Naive thymus-derived CD4-positive, alpha-beta T cell (primary cell): ENCODE measurements at regions of chr9 and their contacts with region 1.

Region 1: GRCh38 chr9:84296146-84296843 is 44.3 kb downstream of the SLC28A3 start:
- DNase-seq: peak in 2 of 9 donors; percentile 9 to 61
- ATAC-seq: peak; percentile 79
- H3K4me3 ChIP-seq: no peak overlapping the region
- H3K4me3 Mint-ChIP-seq: peak overlapping the region in 6 of 10 donors; percentile 5 to 71 (median 44)
- H3K27ac ChIP-seq: peak overlapping the region; percentile 6
- H3K27ac Mint-ChIP-seq: peak overlapping the region; percentile 54 to 100 (median 79)
- H3K4me1 ChIP-seq: peaks cover 8 to 32% of the 10 kb centered on the region in 2 donors
- H3K4me1 Mint-ChIP-seq: peaks cover 19 to 74% (median 48%) of the 10 kb centered on the region in 7 donors
- H3K27me3 ChIP-seq: no peaks in the 10 kb centered on the region
- H3K27me3 Mint-ChIP-seq: no peaks in the 10 kb centered on the region

Region 2: GRCh38 chr9:83956434-83957247 is 339.7 kb before region 1 on chr9:
- CTCF ChIA-PET with region 1: no interaction called
- POLR2A ChIA-PET with region 1: no interaction called
- intact Hi-C with region 1: loop called in 1 of 2 experiments (anchors 5 kb)
- DNase-seq: peak; percentile 25 to 73 (median 42)
- ATAC-seq: peak; percentile 76
- H3K4me3 ChIP-seq: peak overlapping the region; percentile 88
- H3K4me3 Mint-ChIP-seq: peak overlapping the region; percentile 94 to 98 (median 95)
- H3K27ac ChIP-seq: peak overlapping the region; percentile 77
- H3K27ac Mint-ChIP-seq: peak overlapping the region; percentile 88 to 99 (median 94)
- H3K4me1 ChIP-seq: peaks cover 4 to 13% of the 10 kb centered on the region in 2 donors
- H3K4me1 Mint-ChIP-seq: peaks cover 6 to 23% (median 19%) of the 10 kb centered on the region in 7 donors
- H3K27me3 ChIP-seq: no peaks in the 10 kb centered on the region
- H3K27me3 Mint-ChIP-seq: no peaks in the 10 kb centered on the region

Region 3: GRCh38 chr9:84027201-84027600 is 269.1 kb before region 1 on chr9:
- CTCF ChIA-PET with region 1: no interaction called
- POLR2A ChIA-PET with region 1: no interaction called
- intact Hi-C with region 1: no loop called
- DNase-seq: no peak
- ATAC-seq: no peak
- H3K4me3 ChIP-seq: no peak overlapping the region
- H3K4me3 Mint-ChIP-seq: no peak overlapping the region
- H3K27ac ChIP-seq: no peak overlapping the region
- H3K27ac Mint-ChIP-seq: no peak overlapping the region
- H3K4me1 ChIP-seq: no peaks in the 10 kb centered on the region
- H3K4me1 Mint-ChIP-seq: no peaks in the 10 kb centered on the region
- H3K27me3 ChIP-seq: no peaks in the 10 kb centered on the region
- H3K27me3 Mint-ChIP-seq: peaks cover 8 to 17% (median 12%) of the 10 kb centered on the region in 5 donors

Region 4: GRCh38 chr9:84261082-84261746 is 35.1 kb before region 1 on chr9:
- CTCF ChIA-PET with region 1: interaction called, 5 read pairs
- POLR2A ChIA-PET with region 1: no interaction called
- intact Hi-C with region 1: loop called in 1 of 2 experiments (anchors 1 kb)
- DNase-seq: peak; percentile 7 to 46 (median 22)
- ATAC-seq: peak; percentile 77
- H3K4me3 ChIP-seq: no peak overlapping the region
- H3K4me3 Mint-ChIP-seq: peak overlapping the region in 5 of 10 donors; percentile 4 to 68 (median 26)
- H3K27ac ChIP-seq: no peak overlapping the region
- H3K27ac Mint-ChIP-seq: no peak overlapping the region
- H3K4me1 ChIP-seq: no peaks in the 10 kb centered on the region
- H3K4me1 Mint-ChIP-seq: peaks cover 0 to 14% (median 4%) of the 10 kb centered on the region in 7 donors
- H3K27me3 ChIP-seq: no peaks in the 10 kb centered on the region
- H3K27me3 Mint-ChIP-seq: peaks cover 0 to 17% (median 0%) of the 10 kb centered on the region in 5 donors

Region 5: DNA sequence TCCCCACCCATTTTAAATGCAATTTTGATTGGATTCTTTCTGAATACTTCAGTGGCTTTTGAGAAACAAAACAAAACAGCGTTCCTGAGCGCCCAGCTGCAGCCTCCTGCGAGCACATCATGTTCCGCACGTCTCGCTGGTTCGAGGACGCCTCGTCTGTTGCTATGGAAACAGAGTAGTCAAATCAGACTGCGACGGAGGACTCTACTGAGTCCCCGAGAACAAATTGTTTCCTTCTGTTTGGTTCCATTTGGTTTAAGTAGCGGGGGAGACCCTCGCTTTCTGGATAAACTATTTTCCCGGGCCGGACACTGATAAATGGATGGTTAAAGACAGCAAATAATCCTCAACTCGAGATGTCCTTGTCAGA is 24.8 kb before region 1 on chr9:
- CTCF ChIA-PET with region 1: no interaction called
- POLR2A ChIA-PET with region 1: no interaction called
- intact Hi-C with region 1: loop called (anchors 1 to 2 kb)
- DNase-seq: peak in 6 of 9 donors; percentile 35 to 57 (median 47)
- ATAC-seq: peak; percentile 64
- H3K4me3 ChIP-seq: no peak overlapping the region
- H3K4me3 Mint-ChIP-seq: peak overlapping the region in 9 of 10 donors; percentile 42 to 82 (median 64)
- H3K27ac ChIP-seq: no peak overlapping the region
- H3K27ac Mint-ChIP-seq: peak overlapping the region in 4 of 9 donors; percentile 4 to 79 (median 38)
- H3K4me1 ChIP-seq: peaks cover 0 to 7% of the 10 kb centered on the region in 2 donors
- H3K4me1 Mint-ChIP-seq: peaks cover 0 to 34% (median 9%) of the 10 kb centered on the region in 7 donors
- H3K27me3 ChIP-seq: no peaks in the 10 kb centered on the region
- H3K27me3 Mint-ChIP-seq: peaks cover 17 to 55% (median 41%) of the 10 kb centered on the region in 5 donors

Region 6: DNA sequence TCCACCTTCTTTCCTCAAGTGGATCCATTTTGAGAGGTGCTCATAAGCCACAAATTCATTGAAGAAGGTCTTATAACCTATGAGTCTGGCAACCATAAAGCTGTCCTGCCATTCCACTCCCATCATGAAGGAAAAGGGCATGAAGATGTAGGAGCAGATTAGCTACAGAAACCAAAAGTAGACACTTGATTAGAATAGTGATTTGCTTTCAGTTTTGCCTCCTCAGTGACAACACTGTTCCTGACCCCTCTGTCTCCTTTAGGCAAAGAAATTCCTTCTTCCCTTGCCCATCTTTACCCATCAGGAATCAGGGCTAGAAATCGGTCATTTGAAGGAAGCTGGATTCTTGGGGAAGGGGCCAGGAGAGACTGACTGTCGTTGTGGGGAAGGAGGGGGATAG is 10.9 kb before region 1 on chr9:
- CTCF ChIA-PET with region 1: interaction called, 3 read pairs
- POLR2A ChIA-PET with region 1: no interaction called
- intact Hi-C with region 1: loop called in 1 of 2 experiments (anchors 1 kb)
- DNase-seq: no peak
- ATAC-seq: no peak
- H3K4me3 ChIP-seq: no peak overlapping the region
- H3K4me3 Mint-ChIP-seq: peak overlapping the region in 1 of 10 donors; percentile 64
- H3K27ac ChIP-seq: no peak overlapping the region
- H3K27ac Mint-ChIP-seq: peak overlapping the region in 2 of 9 donors; percentile 20 to 87
- H3K4me1 ChIP-seq: no peaks in the 10 kb centered on the region
- H3K4me1 Mint-ChIP-seq: peaks cover 0 to 30% (median 0%) of the 10 kb centered on the region in 7 donors
- H3K27me3 ChIP-seq: no peaks in the 10 kb centered on the region
- H3K27me3 Mint-ChIP-seq: peaks cover 0 to 4% (median 0%) of the 10 kb centered on the region in 5 donors